ENCODE measurements at regions of chr14 and their contacts with region 1.

Region 1: GRCh38 chr14:35404449-35405303 is at the start of gene NFKBIA:
- DNase-seq: peak; percentile 99
- H3K4me3 Mint-ChIP-seq: peak within 1 kb of the TSS; percentile 97
- H3K27ac Mint-ChIP-seq: peak within 1 kb of the TSS; percentile 99
- H3K4me1 Mint-ChIP-seq: peaks cover 42% of the 10 kb centered on the region
- H3K27me3 Mint-ChIP-seq: no peaks in the 10 kb centered on the region
- total RNA-seq, gene NFKBIA: 506 and 534 TPM in 2 replicates

Region 2: GRCh38 chr14:35046048-35046741 is 358.5 kb before region 1 on chr14 and contains the start of gene FAM177A1:
- intact Hi-C with region 1: loop called (anchors 1 kb)
- DNase-seq: peak; percentile 99
- H3K4me3 Mint-ChIP-seq: peak within 1 kb of the TSS; percentile 96
- H3K27ac Mint-ChIP-seq: peak within 1 kb of the TSS; percentile 99
- H3K4me1 Mint-ChIP-seq: peaks cover 28% of the 10 kb centered on the region
- H3K27me3 Mint-ChIP-seq: no peaks in the 10 kb centered on the region
- total RNA-seq, gene FAM177A1: 37.9 and 41.6 TPM in 2 replicates

Region 3: GRCh38 chr14:35201066-35201465 is 203.6 kb before region 1 on chr14:
- intact Hi-C with region 1: loop called (anchors 1 kb)
- DNase-seq: no peak
- H3K4me3 Mint-ChIP-seq: peak overlapping the region; percentile 56
- H3K27ac Mint-ChIP-seq: peak overlapping the region; percentile 77
- H3K4me1 Mint-ChIP-seq: peaks cover 32% of the 10 kb centered on the region
- H3K27me3 Mint-ChIP-seq: no peaks in the 10 kb centered on the region

Region 4: GRCh38 chr14:35292051-35292769 is 112.5 kb before region 1 on chr14 and contains the start of gene PSMA6:
- intact Hi-C with region 1: loop called (anchors 1 kb)
- DNase-seq: peak; percentile 100
- H3K4me3 Mint-ChIP-seq: peak within 1 kb of the TSS; percentile 100
- H3K27ac Mint-ChIP-seq: peak within 1 kb of the TSS; percentile 98
- H3K4me1 Mint-ChIP-seq: peaks cover 49% of the 10 kb centered on the region
- H3K27me3 Mint-ChIP-seq: no peaks in the 10 kb centered on the region
- total RNA-seq, gene PSMA6: 501 and 522 TPM in 2 replicates

Region 5: DNA sequence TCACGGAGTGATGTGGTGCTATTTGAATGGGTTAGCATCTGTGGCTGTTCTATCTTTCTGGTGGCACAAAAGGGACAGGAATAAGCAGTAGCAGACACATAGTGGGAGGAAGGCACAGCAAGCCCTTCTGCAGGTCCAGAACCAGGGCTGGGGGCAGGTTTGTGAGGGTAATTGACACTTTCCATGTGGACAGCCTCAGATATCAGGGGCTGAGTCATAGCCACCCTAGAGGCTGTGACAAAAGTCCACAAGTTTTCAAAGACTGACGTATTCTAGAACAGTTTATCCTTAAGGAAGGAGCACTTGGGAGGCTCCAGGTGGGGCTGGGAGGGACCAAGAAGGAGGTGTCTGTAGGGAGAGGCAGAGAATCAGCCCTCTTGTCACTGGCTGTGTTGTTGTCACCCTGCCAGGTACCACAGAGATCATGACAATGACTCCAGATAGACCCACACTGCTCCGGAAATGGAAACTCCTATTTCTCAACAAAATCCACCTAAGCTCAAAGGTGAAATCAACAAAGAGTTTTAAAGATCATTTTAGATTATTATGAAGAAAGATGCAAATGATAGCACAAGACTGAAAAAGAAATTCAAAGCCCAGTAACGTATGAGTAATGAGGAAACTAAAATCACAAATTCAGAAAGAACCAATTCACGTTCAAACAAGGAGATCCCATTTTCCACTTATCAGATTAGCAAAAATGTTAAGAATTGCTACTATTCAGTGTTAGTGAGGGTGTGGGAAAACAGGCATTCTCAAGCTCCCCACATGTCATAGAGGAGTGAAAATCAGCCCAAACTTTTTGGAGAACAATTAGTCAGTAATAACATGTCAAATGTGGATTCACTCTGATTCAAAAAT is 48.5 kb before region 1 on chr14:
- intact Hi-C with region 1: loop called (anchors 2 kb)
- DNase-seq: peak; percentile 64
- H3K4me3 Mint-ChIP-seq: peak overlapping the region; percentile 9
- H3K27ac Mint-ChIP-seq: peak overlapping the region; percentile 87
- H3K4me1 Mint-ChIP-seq: peaks cover 26% of the 10 kb centered on the region
- H3K27me3 Mint-ChIP-seq: no peaks in the 10 kb centered on the region

Region 6: DNA sequence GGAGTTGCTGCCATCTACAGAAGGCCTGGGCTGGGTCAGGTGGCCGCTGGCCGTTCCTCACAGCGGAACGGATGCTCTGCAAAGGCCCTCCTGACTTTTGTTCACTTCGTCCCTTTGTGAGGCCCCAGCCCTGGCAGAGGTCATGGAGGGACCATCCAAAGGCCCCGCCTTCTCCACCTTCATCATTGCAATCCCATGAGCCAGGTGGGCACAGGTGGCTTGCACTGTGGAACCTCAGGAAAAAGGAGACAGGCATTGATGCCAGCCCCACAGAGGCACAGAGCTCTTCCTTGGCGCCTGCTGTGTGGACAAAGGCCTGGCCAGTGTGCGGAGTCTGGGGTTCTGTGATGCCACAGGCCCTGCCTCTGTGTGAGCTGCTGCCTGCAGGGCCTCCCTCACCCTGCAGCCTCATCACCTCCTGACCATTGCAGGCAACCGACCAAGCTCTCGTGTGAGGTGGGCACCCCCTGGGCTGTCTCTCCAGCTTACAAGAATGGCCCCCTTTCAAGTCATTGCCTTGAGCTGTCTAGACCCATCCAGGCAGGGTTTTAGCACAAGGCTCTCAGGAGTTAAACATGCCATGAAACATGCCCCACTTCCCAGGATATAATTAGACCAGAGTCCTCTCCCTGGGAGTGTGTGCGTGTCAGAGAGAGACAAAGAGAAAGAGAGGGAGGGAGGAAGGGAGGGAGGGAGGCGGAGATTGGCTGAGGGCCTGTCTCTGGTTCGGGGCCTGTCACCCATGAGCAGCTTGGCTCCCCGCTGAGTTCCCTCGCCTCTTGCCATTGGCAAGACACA is 19.4 kb before region 1 on chr14:
- intact Hi-C with region 1: no loop called
- DNase-seq: no peak
- H3K4me3 Mint-ChIP-seq: no peak overlapping the region
- H3K27ac Mint-ChIP-seq: no peak overlapping the region
- H3K4me1 Mint-ChIP-seq: no peaks in the 10 kb centered on the region
- H3K27me3 Mint-ChIP-seq: peaks cover 3% of the 10 kb centered on the region

Region 7: DNA sequence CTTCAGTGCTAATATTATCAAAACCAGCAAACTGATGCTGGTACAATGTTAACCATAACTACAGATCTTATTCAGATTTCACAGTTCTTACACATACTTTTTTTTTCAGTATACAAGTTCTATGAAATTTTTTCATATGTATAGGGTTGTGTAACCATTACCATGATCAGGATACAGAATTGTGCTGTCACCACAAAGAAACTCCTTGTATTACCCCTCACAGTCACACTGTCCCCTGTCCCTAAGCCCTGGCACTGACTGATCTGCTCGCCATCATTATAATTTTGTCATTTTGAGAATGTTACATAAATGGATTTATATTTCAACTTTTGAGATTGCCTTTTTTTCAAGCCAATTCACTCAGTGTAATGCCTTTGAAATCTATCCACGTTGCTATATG is 21.2 kb after region 1 on chr14:
- intact Hi-C with region 1: loop called (anchors 2 kb)
- DNase-seq: no peak
- H3K4me3 Mint-ChIP-seq: no peak overlapping the region
- H3K27ac Mint-ChIP-seq: no peak overlapping the region
- H3K4me1 Mint-ChIP-seq: peaks cover 22% of the 10 kb centered on the region
- H3K27me3 Mint-ChIP-seq: no peaks in the 10 kb centered on the region

Measured in activated CD4-positive, alpha-beta T cell treated with anti-CD3 and anti-CD28 coated beads, Interleukin-2, amount 10 ng/mL, durations not matched to agents 24 days and 14 days (primary cell).